ENCODE measurements at regions of chr12 and their contacts with region 1.

Region 1: DNA sequence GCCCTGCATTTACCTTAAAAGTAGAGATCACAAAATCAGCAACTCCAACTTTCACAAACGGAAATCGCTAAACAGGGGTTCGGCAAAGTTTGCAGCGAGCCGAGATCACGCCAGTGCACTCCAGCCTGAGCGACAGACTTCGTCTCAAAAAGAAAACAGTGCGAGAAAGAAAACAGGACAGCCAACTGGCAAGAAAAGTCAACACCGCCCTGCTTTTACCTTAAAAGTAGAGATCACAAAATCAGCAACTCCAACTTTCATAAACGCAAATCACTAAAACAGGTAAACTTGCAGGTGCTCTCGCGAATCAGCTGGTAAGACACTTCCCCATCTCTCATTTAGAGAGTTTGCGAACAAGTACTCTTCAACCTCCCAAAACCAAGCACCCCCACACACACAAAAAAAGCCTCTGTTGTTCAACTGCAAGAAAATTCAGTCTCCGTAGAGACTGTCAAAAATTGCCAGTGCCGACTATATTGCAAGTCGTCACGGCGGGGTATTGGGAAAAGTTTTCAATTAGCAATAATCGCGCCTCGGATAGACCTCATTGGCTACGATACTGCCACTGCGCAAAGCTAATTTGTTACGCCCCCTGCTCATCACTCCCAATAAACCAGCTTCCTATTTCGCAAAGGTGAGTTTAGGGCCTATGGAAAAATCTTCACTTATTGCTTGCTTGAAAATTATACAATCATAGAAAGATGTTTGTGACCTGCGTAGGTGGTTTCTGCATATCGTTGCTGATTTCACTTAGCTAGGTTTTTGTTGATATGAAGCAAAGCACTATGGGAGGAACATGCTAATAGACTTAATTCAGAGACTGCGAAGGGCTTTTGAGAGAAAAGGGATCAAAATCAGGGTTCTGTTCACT is at the start of gene RNU4-1:
- DNase-seq: peak; percentile 87 to 93 (median 91)
- H3K4me3 ChIP-seq: peak within 1 kb of the TSS; percentile 86 to 96
- H3K4me3 Mint-ChIP-seq: no peak within 1 kb of the TSS
- H3K27ac ChIP-seq: peak within 1 kb of the TSS; percentile 99
- H3K27ac Mint-ChIP-seq: no peak within 1 kb of the TSS
- H3K4me1 ChIP-seq: peaks cover 18% of the 10 kb centered on the region
- H3K4me1 Mint-ChIP-seq: peaks cover 6 to 13% (median 8%) of the 10 kb centered on the region in 4 donors
- H3K27me3 ChIP-seq: no peaks in the 10 kb centered on the region
- H3K27me3 Mint-ChIP-seq: no peaks in the 10 kb centered on the region
- total RNA-seq, gene RNU4-1: 925 to 1,200 TPM

Region 2: DNA sequence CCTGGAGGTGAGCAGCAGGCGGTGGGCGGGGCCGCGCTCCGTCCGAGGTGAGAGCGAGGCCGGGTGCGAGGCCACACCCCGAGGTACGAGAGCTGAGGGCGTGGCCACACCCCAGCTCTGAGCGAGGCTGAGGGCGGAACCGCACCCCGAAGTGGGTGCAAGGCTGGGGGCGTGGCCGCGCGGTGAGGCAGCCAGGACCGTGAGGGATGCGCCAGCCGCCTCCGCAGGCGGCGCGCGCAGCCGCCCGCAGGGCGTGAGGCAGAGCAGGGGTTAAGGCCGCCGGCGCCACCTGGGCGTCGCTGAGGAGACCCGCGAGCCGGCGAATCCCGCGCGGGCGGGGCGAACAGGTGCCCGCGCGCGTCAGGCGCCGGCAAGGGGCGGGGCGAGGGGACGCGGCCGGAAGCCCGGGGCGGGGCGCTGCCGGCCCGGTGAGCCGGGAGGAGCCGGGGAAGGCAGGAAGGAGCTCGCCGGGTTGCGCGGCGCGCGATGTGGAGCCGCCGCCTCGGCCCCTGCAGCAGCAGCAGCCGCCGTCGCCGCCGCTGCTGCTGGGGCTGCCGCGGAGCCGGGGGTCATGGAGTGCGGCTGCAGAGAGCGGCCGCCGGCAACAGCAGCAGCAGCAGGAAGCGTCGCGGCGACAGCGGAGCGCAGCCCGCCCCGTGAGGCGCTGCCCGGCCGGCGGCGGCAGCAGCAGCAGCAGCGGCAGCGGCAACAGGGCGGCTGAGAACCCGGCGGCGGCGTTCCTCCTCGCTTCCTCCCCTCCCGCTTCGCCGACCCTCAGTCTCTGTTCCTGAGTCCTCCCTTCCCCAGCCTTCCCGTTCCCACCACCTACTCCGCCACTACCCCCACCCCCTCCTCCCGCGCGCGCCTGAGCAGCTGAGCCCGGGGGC is 303.9 kb before region 1 on chr12 and contains the start of gene BICDL1:
- CTCF ChIA-PET with region 1: no interaction called
- POLR2A ChIA-PET with region 1: interaction called, 20 read pairs
- intact Hi-C with region 1: no loop called
- DNase-seq: peak; percentile 98 to 99 (median 99)
- H3K4me3 ChIP-seq: peak within 1 kb of the TSS; percentile 60 to 78
- H3K4me3 Mint-ChIP-seq: peak within 1 kb of the TSS; percentile 85 to 95 (median 87)
- H3K27ac ChIP-seq: peak within 1 kb of the TSS; percentile 77
- H3K27ac Mint-ChIP-seq: peak within 1 kb of the TSS; percentile 95 to 99 (median 98)
- H3K4me1 ChIP-seq: peaks cover 36% of the 10 kb centered on the region
- H3K4me1 Mint-ChIP-seq: peaks cover 26 to 41% (median 32%) of the 10 kb centered on the region in 4 donors
- H3K27me3 ChIP-seq: no peaks in the 10 kb centered on the region
- H3K27me3 Mint-ChIP-seq: no peaks in the 10 kb centered on the region
- total RNA-seq, gene BICDL1: 143 to 153 TPM

Region 3: DNA sequence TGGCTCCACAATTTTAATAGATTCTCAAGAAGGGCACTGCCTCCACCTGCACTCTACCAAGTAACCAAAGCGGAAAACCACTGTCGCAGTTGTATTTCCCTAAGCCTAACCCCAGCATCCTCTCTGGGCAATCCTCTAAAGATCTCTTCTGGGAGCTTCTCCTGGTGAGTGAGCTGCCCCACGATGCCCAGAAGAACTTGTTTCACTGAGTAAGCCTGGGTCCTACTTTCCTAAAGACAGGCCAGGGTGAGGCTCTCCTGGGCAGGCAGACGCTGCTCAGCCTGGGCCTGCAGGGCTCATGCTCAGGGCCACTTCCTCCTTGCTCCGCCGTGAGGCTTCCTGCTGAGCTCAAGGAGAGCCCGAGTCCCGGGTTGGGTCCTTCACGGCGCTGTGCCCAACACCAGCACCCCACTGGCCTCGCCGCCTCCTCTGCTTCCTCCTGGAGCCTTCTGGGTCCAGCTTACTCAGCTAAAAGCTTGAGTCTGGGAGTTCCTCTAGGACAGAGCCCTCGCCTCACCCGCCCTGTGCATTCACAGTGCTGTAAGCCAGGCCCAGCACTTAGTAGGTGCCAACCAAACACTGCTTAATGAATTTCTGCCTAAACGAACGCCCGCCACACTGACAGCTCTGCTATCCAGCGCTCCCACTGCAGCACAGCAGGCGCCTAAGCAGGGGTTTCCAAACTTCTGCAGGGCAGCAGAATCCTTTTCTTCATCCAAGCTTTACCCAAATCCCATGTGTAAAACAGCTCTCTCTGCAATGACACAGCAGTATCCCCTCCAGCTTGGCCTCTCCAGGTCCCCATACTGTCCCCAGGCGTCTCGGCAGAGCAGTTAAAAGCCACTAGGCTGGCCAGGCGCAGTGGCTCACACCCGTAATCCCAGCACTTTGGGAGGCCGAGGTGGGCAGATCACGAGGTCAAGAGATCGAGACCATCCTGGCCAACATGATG is 182.1 kb before region 1 on chr12:
- CTCF ChIA-PET with region 1: no interaction called
- POLR2A ChIA-PET with region 1: interaction called, 34 read pairs
- intact Hi-C with region 1: no loop called
- DNase-seq: peak; percentile 49 to 70 (median 61)
- H3K4me3 ChIP-seq: peak overlapping the region in 1 of 2 donors; percentile 45
- H3K4me3 Mint-ChIP-seq: peak overlapping the region; percentile 33 to 85 (median 80)
- H3K27ac ChIP-seq: peak overlapping the region; percentile 56
- H3K27ac Mint-ChIP-seq: peak overlapping the region; percentile 69 to 94 (median 78)
- H3K4me1 ChIP-seq: peaks cover 76% of the 10 kb centered on the region
- H3K4me1 Mint-ChIP-seq: peaks cover 52 to 87% (median 67%) of the 10 kb centered on the region in 4 donors
- H3K27me3 ChIP-seq: no peaks in the 10 kb centered on the region
- H3K27me3 Mint-ChIP-seq: no peaks in the 10 kb centered on the region

Region 4: DNA sequence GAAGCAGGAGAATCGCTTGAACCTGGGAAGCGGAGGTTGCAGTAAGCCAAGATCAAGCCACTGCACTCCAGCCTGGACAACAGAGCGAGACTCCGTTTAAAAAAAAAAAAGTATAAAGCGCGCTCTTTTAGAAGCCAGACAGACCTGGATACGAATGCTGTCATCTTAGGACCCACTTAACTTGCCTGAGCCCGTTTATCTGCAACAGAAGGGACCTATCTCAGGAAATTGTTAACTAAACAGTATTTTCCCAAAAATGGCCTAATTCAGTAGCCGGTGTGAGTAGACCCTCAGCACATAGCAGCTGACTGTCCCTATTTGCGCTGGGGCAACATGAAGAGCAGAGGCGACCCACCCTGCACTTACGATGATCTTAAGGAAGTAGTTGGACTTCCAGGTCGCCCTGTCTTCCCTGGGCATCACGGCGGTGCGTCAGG is 92.5 kb before region 1 on chr12:
- CTCF ChIA-PET with region 1: interaction called, 18 read pairs
- POLR2A ChIA-PET with region 1: interaction called, 241 read pairs
- intact Hi-C with region 1: loop called (anchors 1 kb)
- DNase-seq: peak in 1 of 5 donors; percentile 19
- H3K4me3 ChIP-seq: peak overlapping the region; percentile 80 to 91
- H3K4me3 Mint-ChIP-seq: peak overlapping the region; percentile 93 to 99 (median 98)
- H3K27ac ChIP-seq: peak overlapping the region; percentile 84
- H3K27ac Mint-ChIP-seq: peak overlapping the region; percentile 93 to 99 (median 98)
- H3K4me1 ChIP-seq: peaks cover 42% of the 10 kb centered on the region
- H3K4me1 Mint-ChIP-seq: peaks cover 23 to 60% (median 36%) of the 10 kb centered on the region in 4 donors
- H3K27me3 ChIP-seq: no peaks in the 10 kb centered on the region
- H3K27me3 Mint-ChIP-seq: no peaks in the 10 kb centered on the region

Region 5: GRCh38 chr12:120249875-120250795 is 42.8 kb before region 1 on chr12:
- CTCF ChIA-PET with region 1: no interaction called
- POLR2A ChIA-PET with region 1: interaction called, 133 read pairs
- intact Hi-C with region 1: loop called (anchors 1 kb)
- DNase-seq: peak; percentile 52 to 61 (median 59)
- H3K4me3 ChIP-seq: peak overlapping the region; percentile 4 to 49
- H3K4me3 Mint-ChIP-seq: peak overlapping the region; percentile 65 to 91 (median 82)
- H3K27ac ChIP-seq: peak overlapping the region; percentile 50
- H3K27ac Mint-ChIP-seq: peak overlapping the region; percentile 81 to 99 (median 95)
- H3K4me1 ChIP-seq: peaks cover 90% of the 10 kb centered on the region
- H3K4me1 Mint-ChIP-seq: peaks cover 67 to 88% (median 78%) of the 10 kb centered on the region in 4 donors
- H3K27me3 ChIP-seq: no peaks in the 10 kb centered on the region
- H3K27me3 Mint-ChIP-seq: no peaks in the 10 kb centered on the region

Region 6: DNA sequence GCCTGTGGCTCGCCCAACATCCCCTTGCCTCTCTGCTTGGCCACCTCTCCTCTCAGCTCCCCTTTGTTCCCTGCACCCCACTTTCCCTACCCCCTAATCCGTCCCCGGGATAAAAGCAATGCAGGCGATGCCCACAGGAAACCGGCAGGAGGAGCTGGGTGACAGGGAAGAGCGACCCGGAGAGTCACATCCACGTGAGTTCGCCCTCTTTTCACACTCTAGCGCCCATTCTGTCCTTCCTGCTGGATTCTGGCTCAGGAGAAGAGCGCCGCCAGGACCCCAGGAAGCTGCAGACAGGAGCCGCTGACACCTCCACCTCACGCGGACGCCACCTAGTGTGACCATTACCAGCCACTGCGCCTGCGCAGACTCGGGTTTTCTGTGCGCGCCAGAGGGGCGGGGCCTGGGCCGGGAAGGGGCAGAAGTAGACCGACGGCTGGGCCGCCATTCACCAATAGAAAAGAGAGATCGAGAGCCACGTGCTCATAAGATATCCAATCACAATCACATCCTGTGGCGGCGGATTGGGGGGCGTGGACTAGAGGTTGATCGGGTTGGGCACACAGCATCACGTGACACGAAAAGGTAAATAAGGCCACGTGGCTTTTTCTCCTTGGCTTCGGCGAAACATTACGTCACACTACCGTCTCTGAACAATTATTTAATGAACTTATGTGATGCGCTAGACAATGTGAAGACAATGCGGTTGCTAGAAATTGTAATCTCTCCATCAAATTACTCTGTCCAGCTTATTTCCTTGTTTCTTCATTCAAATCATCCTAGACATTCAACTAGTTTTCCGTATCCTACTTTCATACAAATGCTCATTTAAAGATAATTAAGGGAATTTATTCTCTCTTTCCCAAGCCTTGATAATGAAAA is 24.6 kb after region 1 on chr12:
- CTCF ChIA-PET with region 1: interaction called, 14 read pairs
- POLR2A ChIA-PET with region 1: interaction called, 113 read pairs
- intact Hi-C with region 1: loop called (anchors 1 kb)
- DNase-seq: peak; percentile 100
- H3K4me3 ChIP-seq: peak overlapping the region; percentile 42 to 65
- H3K4me3 Mint-ChIP-seq: peak overlapping the region; percentile 87 to 95 (median 92)
- H3K27ac ChIP-seq: peak overlapping the region; percentile 81
- H3K27ac Mint-ChIP-seq: peak overlapping the region; percentile 90 to 99 (median 98)
- H3K4me1 ChIP-seq: peaks cover 10% of the 10 kb centered on the region
- H3K4me1 Mint-ChIP-seq: peaks cover 11 to 16% (median 14%) of the 10 kb centered on the region in 4 donors
- H3K27me3 ChIP-seq: no peaks in the 10 kb centered on the region
- H3K27me3 Mint-ChIP-seq: no peaks in the 10 kb centered on the region

Region 7: DNA sequence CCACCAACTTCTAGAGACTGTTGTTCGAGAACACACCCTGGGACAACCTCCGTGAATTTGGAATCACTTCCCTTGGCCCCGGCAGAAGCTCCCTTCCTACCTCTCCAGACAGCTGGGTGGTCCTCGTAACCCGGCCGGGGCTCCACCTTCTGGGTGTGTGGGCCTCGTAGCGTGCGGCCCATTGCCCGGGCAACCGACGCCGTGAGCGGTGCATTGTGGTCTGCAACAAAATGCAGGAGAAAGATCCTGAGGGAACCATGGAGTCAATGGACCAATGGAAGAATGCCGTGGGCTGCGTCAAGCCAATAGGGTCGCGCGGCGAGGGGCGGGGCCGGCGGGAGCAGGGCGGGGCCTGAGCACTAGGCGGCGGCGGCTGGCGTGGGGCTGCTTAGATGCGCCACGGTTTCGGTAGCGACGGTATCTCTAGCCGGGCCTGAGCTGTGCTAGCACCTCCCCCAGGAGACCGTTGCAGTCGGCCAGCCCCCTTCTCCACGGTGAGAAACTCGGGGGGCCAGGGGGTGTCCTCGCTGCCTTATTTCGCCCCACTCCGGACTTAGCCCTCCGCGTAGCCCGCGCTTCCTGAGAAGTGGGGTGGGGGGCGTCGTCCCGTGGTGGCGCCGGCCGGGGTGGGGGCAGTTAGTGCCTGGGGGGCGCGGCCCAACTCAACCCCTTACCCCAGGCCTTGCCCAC is 203.0 kb after region 1 on chr12 and contains the start of gene DYNLL1:
- CTCF ChIA-PET with region 1: no interaction called
- POLR2A ChIA-PET with region 1: interaction called, 15 read pairs
- intact Hi-C with region 1: no loop called
- DNase-seq: peak; percentile 96 to 98 (median 97)
- H3K4me3 ChIP-seq: peak within 1 kb of the TSS; percentile 93 to 94
- H3K4me3 Mint-ChIP-seq: peak within 1 kb of the TSS; percentile 91 to 98 (median 94)
- H3K27ac ChIP-seq: peak within 1 kb of the TSS; percentile 82
- H3K27ac Mint-ChIP-seq: peak within 1 kb of the TSS; percentile 89 to 96 (median 94)
- H3K4me1 ChIP-seq: peaks cover 19% of the 10 kb centered on the region
- H3K4me1 Mint-ChIP-seq: peaks cover 22 to 49% (median 37%) of the 10 kb centered on the region in 4 donors
- H3K27me3 ChIP-seq: no peaks in the 10 kb centered on the region
- H3K27me3 Mint-ChIP-seq: no peaks in the 10 kb centered on the region
- total RNA-seq, gene DYNLL1: 97.5 to 108 TPM